Activated T-helper 1 cell treated with anti-CD3 and anti-CD28 coated beads, Interleukin-12 subunit alpha, Interleukin-12 subunit beta, Interleukin-2, Interleukin-4 antibody, amounts not matched to agents 30 ng/mL and 10 ng/mL and 1 ng/mL, durations not matched to agents 14 hours and 24 hours and 36 hours (primary cell): ENCODE measurements at regions of chr2 and their contacts with region 1.

Region 1: DNA sequence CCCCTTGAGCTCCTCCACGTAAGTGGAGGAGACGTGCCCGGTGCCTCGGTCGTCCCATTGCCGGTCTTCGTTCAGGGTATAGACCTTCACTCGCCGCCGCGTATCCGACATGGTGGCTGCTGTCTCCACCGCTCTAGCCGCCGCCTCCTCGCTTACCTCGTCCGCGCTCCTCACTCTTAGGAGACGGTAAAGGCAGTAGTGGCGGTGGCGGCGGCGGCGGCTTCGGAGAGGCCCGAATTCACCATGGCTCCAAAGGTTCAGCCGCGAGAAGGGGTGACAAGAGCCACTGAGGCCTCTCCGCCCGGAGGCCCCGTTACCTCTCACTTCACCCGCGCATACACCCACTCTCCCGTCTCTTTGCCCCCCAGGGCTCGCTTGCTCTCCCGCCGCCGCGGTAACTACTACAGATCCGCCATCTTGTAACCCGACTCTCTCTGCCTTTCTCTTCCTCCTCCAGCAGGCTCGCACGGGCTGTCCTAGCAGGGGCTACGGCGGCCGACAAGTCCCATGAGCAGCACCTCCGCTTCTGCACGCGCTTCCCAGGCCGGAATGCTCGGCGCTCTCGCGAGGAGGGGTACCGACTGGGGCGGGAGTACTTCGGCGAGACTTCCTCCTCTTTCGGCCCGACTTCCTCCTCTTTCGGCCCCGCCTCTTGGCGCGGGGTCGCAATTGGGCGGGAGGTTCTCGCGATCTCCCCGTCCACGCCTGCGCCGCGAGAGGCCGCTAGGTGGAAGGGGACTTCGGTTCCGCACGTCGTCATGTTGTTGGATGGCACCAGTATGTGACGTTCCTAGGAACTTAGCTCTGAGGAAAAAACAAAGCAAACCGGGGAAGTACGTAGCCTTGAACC is at the start of gene PPP4R3B:
- DNase-seq: peak; percentile 99
- H3K4me3 Mint-ChIP-seq: no peak within 1 kb of the TSS
- H3K27ac Mint-ChIP-seq: no peak within 1 kb of the TSS
- H3K4me1 Mint-ChIP-seq: peaks cover 38% of the 10 kb centered on the region
- H3K27me3 Mint-ChIP-seq: no peaks in the 10 kb centered on the region
- total RNA-seq, gene PPP4R3B: 69.8 and 74.6 TPM in 2 replicates

Region 2: DNA sequence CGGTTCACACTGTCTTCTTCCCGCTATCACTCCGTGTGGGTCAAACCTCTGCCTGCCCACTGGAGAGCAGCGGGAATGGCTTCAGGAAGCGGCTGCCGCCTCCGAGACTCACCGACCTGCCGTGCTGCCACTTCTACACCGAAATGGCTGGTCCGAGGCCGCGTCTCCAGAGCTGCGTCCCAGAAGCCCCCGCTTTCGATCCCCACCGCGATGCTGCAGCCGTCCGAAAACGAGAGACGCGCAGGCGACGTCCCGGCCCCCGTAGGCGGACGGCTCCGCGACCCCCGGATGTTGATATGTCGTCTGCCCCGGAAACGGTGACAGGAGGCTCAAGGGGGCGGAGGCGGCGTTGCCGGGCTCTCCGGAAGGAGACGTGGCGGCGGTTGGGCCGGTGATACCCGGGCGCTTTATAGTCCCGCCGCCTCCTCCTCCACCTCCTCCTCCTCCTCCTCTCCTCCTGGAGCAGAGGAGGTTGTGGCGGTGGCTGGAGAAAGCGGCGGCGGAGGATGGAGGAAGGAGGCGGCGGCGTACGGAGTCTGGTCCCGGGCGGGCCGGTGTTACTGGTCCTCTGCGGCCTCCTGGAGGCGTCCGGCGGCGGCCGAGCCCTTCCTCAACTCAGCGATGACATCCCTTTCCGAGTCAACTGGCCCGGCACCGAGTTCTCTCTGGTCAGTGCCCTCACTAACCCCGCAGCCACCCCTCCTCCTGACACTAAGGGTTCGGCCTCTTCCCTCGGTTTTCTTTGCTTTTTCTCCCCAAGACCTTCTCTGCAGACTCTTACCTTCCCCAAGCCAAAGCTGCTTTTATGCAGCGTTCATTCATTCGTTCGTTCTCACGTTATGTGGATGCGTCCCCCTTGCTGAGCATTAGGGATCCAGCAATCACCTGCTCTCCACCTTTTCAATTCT is 1830.4 kb before region 1 on chr2 and contains the starts of genes ASB3 and ERLEC1:
- intact Hi-C with region 1: loop called (anchors 1 kb)
- DNase-seq: peak; percentile 87
- H3K4me3 Mint-ChIP-seq: peak within 1 kb of the TSS; percentile 99
- H3K27ac Mint-ChIP-seq: peak within 1 kb of the TSS; percentile 98
- H3K4me1 Mint-ChIP-seq: peaks cover 47% of the 10 kb centered on the region
- H3K27me3 Mint-ChIP-seq: no peaks in the 10 kb centered on the region
- total RNA-seq, gene ASB3: 18.6 and 21.5 TPM in 2 replicates
- total RNA-seq, gene ERLEC1: 28.4 and 29.6 TPM in 2 replicates

Region 3: DNA sequence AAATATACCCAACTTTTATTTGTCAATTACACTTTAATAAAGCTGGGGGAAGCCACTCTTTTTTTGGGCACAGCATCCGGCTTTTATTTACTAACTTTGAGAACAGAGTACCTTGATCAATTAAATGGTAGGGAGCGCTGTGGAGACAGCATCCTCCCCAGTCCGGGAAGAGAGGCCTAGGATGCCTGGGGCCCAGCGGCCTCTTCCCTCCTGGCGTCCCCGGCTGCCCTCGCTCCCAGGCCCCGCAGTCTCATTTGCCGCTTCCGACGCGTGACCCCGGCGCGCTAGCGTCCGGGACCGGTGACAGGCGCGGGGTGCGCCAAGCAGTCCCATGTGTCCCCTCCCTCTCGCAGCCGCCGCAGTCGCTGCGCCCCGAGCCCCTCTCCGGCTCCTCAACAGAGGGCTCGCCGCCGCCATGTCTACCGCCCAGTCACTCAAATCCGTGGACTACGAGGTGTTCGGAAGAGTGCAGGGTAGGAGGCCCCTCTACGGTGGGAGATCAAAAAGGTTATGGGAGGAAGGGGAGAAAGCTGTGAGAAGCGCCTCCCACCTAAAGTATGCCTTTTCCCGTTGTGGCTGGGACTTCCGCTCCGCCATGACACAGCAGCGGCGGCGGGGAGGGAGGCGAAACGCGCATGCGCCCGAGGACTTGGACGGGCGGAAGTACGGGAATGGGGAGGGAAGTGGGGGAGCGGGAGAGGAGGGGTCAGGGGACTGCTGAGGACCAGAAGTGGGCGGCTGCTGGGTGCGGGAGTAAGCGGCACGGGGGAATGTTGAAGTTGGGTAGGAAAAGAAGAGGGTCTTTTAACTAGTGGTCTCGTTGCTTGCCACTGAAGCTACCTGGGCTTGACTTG is 1501.9 kb before region 1 on chr2 and contains the start of gene ACYP2:
- intact Hi-C with region 1: loop called (anchors 10 kb)
- DNase-seq: peak; percentile 88
- H3K4me3 Mint-ChIP-seq: peak within 1 kb of the TSS; percentile 92
- H3K27ac Mint-ChIP-seq: peak within 1 kb of the TSS; percentile 97
- H3K4me1 Mint-ChIP-seq: peaks cover 14% of the 10 kb centered on the region
- H3K27me3 Mint-ChIP-seq: peaks cover 7% of the 10 kb centered on the region
- total RNA-seq, gene ACYP2: 5.2 and 5.9 TPM in 2 replicates

Region 4: GRCh38 chr2:55232084-55232862 is 385.1 kb before region 1 on chr2 and contains the starts of genes CLHC1 and RPS27A:
- intact Hi-C with region 1: loop called (anchors 1 kb)
- DNase-seq: peak; percentile 89
- H3K4me3 Mint-ChIP-seq: peak within 1 kb of the TSS; percentile 100
- H3K27ac Mint-ChIP-seq: peak within 1 kb of the TSS; percentile 97
- H3K4me1 Mint-ChIP-seq: peaks cover 63% of the 10 kb centered on the region
- H3K27me3 Mint-ChIP-seq: no peaks in the 10 kb centered on the region
- total RNA-seq, gene CLHC1: 9.0 and 12.3 TPM in 2 replicates
- total RNA-seq, gene RPS27A: 949 and 953 TPM in 2 replicates

Region 5: DNA sequence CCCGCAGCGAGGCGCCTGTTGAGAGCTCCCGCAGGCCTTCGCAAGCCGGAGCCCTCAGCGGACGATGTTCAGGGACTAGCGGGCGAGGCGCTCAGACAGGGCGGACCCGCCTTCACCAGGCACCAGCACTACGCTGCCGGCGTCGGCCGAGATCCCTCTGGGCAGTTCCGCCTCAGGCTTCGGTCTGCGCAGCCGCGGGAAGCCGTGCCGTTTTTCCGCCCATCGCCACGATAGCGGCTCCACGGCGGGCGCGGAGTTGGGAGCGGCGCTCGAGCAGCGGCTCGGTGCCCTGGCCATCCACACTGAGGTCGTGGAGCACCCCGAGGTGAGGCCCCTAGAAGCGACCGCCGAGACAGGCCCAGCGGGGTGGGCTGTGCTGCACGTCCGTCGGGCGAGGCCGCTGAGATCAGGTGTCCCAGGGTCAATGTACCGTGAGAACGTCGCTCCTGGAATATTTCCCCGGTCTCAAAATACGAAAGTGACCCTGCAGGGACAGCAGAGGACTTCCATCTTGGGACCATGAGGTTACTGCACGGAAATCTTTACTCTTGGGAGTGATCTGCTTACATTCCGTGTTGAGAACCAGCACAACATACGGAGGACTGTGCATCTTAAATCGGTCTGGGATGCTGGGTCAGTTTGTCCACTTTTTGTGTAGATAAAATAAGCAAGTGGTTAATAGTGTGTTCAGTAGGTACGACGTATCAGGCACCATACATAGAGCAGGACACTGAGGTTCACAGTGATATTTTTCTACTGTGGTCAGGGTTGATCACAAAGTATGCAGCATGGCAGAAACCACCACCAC is 335.1 kb before region 1 on chr2:
- intact Hi-C with region 1: loop called (anchors 5 kb)
- DNase-seq: peak; percentile 85
- H3K4me3 Mint-ChIP-seq: peak overlapping the region; percentile 89
- H3K27ac Mint-ChIP-seq: peak overlapping the region; percentile 93
- H3K4me1 Mint-ChIP-seq: peaks cover 12% of the 10 kb centered on the region
- H3K27me3 Mint-ChIP-seq: peaks cover 2% of the 10 kb centered on the region

Region 6: DNA sequence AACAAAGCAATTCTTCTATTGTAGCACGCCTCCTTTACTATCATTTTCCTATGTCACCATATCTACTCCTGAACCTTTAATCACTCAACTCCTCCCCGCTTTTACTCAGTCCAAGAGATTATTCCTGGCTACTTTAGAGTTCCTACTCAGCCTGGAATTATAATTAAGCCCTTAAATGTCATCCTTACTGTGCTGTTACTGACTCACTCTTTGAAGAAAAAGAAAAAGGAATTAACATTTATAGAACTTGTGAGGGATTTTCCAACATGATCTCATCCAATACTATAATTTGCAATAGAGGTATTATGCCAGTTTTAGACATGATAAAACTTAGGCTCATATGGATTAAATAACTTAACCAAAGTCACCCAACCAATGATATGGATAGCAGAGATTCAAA is 259.5 kb before region 1 on chr2:
- intact Hi-C with region 1: no loop called
- DNase-seq: no peak
- H3K4me3 Mint-ChIP-seq: no peak overlapping the region
- H3K27ac Mint-ChIP-seq: no peak overlapping the region
- H3K4me1 Mint-ChIP-seq: no peaks in the 10 kb centered on the region
- H3K27me3 Mint-ChIP-seq: no peaks in the 10 kb centered on the region

Region 7: DNA sequence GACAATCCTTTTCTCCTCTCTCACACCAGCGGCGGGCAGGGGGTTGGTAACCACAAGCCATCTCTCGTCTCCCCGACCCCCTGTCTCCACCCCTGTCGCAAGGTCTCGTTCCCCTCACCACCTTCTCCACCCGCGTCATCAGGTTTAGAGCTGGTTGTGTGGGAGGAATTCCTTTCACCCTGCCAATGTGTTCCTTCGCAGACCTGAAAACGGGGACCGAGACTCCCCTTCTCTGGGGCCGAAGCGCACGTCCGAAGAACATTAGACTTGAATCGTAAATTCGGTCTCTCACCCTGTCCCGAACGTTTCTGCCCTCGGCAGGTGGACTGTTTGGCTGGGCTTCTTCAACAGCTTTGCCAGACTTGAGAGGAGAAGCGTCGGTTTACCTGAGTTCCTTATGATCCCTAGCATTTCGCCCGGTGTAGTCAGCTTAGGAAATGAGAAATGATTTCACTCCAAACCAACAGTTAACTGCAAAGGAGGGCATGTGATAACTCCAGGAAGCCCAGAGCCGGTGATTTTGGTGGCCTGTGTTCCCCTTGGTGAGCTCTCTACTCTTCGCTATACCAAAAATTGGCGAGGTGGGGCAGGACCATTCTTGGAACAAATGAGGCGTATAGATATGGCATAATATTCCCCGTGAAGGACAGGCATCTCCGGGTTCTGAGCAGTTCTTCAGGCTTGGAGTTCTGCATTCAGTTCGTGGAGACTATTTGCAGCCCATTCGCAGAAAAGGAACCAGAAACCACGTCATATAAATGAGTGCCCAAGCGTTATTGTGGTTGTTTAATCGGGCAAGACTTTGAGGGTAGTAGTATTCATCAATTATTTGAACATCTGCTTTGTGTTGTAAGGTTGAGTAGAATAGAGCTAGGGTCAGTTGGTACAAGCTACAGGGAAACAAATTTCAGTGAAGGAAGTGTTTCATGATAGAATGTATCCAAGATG is 97.2 kb before region 1 on chr2:
- intact Hi-C with region 1: loop called (anchors 1 kb)
- DNase-seq: peak; percentile 15
- H3K4me3 Mint-ChIP-seq: peak overlapping the region; percentile 97
- H3K27ac Mint-ChIP-seq: peak overlapping the region; percentile 95
- H3K4me1 Mint-ChIP-seq: peaks cover 17% of the 10 kb centered on the region
- H3K27me3 Mint-ChIP-seq: no peaks in the 10 kb centered on the region

Region 8: GRCh38 chr2:55555977-55556376 is 61.4 kb before region 1 on chr2:
- intact Hi-C with region 1: no loop called
- DNase-seq: no peak
- H3K4me3 Mint-ChIP-seq: no peak overlapping the region
- H3K27ac Mint-ChIP-seq: no peak overlapping the region
- H3K4me1 Mint-ChIP-seq: no peaks in the 10 kb centered on the region
- H3K27me3 Mint-ChIP-seq: no peaks in the 10 kb centered on the region

Region 9: DNA sequence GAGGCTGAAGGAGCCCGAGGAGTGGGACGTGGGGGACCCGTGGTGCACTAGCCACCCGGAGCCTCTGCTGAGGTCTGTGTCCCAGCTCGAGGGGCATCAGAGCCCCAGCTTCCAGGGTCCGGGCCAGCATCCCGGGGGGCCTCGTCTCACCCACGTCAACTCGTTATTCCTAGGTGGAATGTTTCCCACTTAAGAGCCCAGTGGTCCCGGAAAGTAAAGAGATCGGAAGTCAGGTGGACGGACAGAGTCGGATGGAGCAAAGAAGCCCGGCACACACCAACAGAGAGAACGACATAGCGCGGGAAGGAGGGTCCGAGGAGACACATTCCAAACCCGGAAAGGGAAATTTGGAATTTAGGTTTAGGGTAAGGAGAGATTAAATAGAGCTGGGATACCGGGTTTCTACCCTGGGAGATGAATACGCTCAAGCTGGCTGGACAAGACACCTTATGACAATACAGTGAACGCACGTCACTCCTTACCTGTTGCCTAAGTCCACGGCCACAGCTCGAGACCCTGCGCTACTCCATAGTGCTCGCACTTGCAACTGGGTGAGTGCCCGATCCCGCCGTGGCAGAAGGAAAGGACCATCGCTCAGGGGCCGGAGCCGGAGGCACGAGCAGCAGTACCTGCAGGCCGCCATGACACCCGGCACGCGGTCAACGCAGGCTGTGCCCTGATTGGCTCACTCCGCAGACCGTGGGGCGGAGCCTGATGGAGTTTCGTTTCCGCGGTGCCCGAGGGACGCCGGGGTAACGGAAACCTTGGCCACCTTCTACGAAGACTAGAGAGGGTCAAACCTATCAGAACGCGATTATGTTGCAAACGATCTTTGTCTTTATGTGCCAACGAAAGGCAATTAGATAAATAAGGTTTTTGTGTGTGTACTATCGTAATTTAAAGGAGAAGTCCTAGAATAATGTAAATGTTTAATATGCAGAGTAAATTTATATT is 76.1 kb after region 1 on chr2 and contains the start of gene PNPT1:
- intact Hi-C with region 1: loop called (anchors 1 kb)
- DNase-seq: peak; percentile 92
- H3K4me3 Mint-ChIP-seq: peak within 1 kb of the TSS; percentile 98
- H3K27ac Mint-ChIP-seq: peak within 1 kb of the TSS; percentile 89
- H3K4me1 Mint-ChIP-seq: peaks cover 39% of the 10 kb centered on the region
- H3K27me3 Mint-ChIP-seq: peaks cover 2% of the 10 kb centered on the region
- total RNA-seq, gene PNPT1: 65.1 and 71.1 TPM in 2 replicates